B cell (primary cell): ENCODE measurements at regions of chr1 and their contacts with region 1.

Region 1: DNA sequence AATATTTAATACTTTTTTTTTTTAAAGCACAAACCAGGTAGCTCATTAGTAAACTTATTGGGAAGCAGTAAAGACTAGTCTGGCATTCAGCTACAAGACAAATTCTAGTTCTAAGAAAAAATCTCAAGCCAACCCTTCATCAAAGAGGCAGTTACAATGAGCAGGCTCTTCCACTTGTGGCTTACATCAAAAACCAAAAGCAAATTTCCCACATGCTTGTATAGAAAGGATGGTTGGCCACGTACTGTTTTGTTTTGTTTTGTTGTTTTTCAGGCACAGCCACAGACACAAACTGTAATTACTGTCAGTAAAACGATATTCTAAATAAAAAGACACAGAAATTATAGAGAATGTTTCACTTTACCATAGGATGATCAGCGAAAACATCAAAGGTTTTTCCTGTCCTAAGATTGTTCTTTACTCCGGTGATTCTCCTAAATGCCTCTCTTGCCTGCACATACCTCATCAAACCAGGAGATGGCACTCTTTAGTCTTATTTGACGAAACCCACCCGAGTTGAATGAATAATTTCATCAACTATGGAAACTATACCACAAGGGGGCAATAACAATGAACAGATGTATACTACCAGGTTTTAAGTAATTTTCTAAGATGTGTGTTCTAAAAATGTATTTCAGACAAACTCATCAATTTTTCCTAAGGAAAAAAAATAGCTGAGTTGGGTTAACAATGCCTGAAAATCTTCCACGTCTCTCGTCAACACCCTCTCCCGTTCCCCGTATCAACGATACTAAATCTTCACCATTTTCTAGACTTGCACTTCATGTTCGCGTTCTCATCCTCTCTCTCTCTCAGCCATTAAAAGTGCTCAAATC is 26.9 kb downstream of the RPL5 start:
- DNase-seq: peak; percentile 87
- ATAC-seq: peak; percentile 98
- H3K4me3 ChIP-seq: no peak overlapping the region
- H3K4me3 Mint-ChIP-seq: peak overlapping the region; percentile 2
- H3K27ac ChIP-seq: peak overlapping the region in 1 of 2 donors; percentile 38
- H3K27ac Mint-ChIP-seq: peak overlapping the region; percentile 0
- H3K4me1 ChIP-seq: peaks cover 0 to 4% of the 10 kb centered on the region in 2 donors
- H3K4me1 Mint-ChIP-seq: peaks cover 13% of the 10 kb centered on the region
- H3K27me3 ChIP-seq: no peaks in the 10 kb centered on the region
- H3K27me3 Mint-ChIP-seq: no peaks in the 10 kb centered on the region
- CTCF ChIP-seq: peak; percentile 99

Region 2: DNA sequence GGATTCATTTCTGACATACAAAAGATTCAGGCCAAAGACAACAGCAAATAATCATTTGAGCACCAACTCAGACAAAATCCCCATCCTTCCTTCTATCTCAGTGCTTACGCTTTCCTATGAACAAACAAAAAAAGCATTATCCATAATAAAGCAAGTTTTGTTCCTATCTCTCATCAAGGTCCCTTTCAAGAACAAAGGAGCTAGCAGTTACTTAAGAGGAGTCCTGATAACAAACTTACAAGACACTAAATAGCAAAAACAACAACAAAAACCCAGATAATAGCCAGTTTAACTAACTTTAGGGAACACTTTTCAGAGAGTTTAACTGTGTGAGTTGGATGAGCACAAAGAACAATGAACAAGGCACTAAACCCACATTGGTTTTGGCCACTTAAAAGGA is 84.4 kb before region 1 on chr1:
- CTCF ChIA-PET with region 1: no interaction called
- POLR2A ChIA-PET with region 1: no interaction called
- intact Hi-C with region 1: no loop called
- DNase-seq: no peak
- ATAC-seq: no peak
- H3K4me3 ChIP-seq: no peak overlapping the region
- H3K4me3 Mint-ChIP-seq: no peak overlapping the region
- H3K27ac ChIP-seq: no peak overlapping the region
- H3K27ac Mint-ChIP-seq: no peak overlapping the region
- H3K4me1 ChIP-seq: no peaks in the 10 kb centered on the region
- H3K4me1 Mint-ChIP-seq: peaks cover 12% of the 10 kb centered on the region
- H3K27me3 ChIP-seq: no peaks in the 10 kb centered on the region
- H3K27me3 Mint-ChIP-seq: no peaks in the 10 kb centered on the region
- CTCF ChIP-seq: no peak

Region 3: DNA sequence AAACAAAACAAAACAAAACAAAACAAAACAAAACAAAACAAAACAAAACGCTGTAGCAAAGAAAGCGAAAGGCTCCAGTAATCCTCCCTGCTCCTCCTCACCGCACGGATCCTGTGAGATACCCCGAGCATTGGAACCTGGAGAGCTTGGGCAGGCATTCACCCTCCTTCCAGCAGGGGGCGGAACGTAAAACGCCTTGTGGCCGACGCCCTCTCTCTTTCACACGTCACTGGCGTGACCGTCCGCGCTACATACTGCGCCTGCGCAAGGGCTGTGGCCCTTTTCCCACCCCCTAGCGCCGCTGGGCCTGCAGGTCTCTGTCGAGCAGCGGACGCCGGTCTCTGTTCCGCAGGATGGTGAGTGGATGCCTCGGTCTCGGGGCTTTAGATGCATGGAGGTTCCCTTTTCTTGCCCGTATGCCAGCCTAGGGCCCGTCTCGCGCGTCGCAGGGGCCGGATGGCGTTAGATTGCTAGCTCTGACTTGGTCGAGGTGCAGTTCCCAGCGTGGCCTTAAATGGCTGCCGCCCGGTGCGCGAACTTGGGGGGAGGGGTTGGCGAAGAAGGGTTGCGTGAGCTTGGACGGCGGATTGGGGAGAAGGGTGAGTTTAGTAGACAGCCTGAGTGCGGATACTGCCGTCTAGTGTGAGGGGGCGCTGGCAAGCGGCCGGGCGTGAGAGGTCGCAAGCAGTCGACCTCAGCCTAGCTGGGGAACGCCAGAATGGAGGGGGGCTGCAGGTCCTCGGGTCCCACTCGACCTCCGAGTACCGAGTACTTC is 26.8 kb before region 1 on chr1 and contains the start of gene RPL5:
- CTCF ChIA-PET with region 1: interaction called, 6 read pairs
- POLR2A ChIA-PET with region 1: no interaction called
- intact Hi-C with region 1: loop called (anchors 1 kb)
- DNase-seq: peak; percentile 100
- ATAC-seq: peak; percentile 88
- H3K4me3 ChIP-seq: peak within 1 kb of the TSS; percentile 84 to 98 (median 92)
- H3K4me3 Mint-ChIP-seq: peak within 1 kb of the TSS; percentile 100
- H3K27ac ChIP-seq: peak within 1 kb of the TSS; percentile 90 to 96
- H3K27ac Mint-ChIP-seq: peak within 1 kb of the TSS; percentile 100
- H3K4me1 ChIP-seq: peaks cover 25 to 28% of the 10 kb centered on the region in 2 donors
- H3K4me1 Mint-ChIP-seq: peaks cover 47% of the 10 kb centered on the region
- H3K27me3 ChIP-seq: no peaks in the 10 kb centered on the region
- H3K27me3 Mint-ChIP-seq: no peaks in the 10 kb centered on the region
- CTCF ChIP-seq: peak; percentile 89
- total RNA-seq, gene RPL5: 1,049 and 1,104 TPM in 2 replicates

Region 4: GRCh38 chr1:92882819-92883218 is 24.0 kb after region 1 on chr1:
- CTCF ChIA-PET with region 1: interaction called, 11 read pairs
- POLR2A ChIA-PET with region 1: no interaction called
- intact Hi-C with region 1: no loop called
- DNase-seq: peak; percentile 43
- ATAC-seq: peak; percentile 54
- H3K4me3 ChIP-seq: no peak overlapping the region
- H3K4me3 Mint-ChIP-seq: peak overlapping the region; percentile 40
- H3K27ac ChIP-seq: peak overlapping the region in 1 of 2 donors; percentile 76
- H3K27ac Mint-ChIP-seq: peak overlapping the region; percentile 83
- H3K4me1 ChIP-seq: peaks cover 22 to 25% of the 10 kb centered on the region in 2 donors
- H3K4me1 Mint-ChIP-seq: peaks cover 45% of the 10 kb centered on the region
- H3K27me3 ChIP-seq: no peaks in the 10 kb centered on the region
- H3K27me3 Mint-ChIP-seq: no peaks in the 10 kb centered on the region
- CTCF ChIP-seq: no peak

Region 5: DNA sequence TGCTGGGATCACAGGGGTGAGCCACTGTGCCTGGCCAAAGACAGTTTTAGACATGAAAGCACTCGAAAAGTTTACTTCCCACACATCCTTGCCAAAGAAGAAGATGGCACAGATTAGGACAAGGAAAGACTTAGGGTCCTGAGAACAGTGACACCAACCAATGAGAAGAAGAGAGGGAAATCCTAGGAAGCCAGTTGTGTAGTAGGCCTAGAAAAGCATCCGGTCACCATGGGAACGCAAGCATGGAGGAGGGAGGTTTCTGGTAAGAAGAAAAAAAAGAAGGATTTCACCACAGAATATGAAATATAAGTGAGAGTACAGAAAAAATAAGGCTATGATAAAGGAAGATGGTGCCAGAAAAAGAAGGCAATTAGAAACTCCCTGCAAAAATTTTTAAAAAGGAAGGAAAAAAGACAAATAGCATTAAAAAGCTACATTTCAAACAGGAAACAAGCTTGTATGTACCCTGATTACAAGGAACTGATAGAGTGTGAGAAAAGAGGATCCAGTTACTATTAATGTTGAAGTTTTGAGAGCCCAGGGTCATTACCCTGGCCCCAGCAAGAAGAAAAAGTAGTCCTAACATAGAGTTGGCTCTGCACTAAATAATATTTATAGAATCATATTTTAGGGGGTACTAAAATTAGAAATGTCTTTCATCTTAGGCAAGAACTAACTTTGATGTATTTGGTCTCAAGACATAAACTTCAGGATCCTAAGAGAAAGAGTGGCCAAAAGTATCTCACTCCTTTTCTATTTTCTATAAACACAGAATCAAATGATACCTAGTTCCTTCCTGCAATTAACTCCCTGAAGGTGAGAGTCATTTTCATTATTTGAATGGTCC is 86.3 kb after region 1 on chr1:
- CTCF ChIA-PET with region 1: interaction called, 11 read pairs
- POLR2A ChIA-PET with region 1: no interaction called
- intact Hi-C with region 1: no loop called
- DNase-seq: peak; percentile 51
- ATAC-seq: peak; percentile 53
- H3K4me3 ChIP-seq: peak overlapping the region in 2 of 5 experiments; percentile 5 to 50
- H3K4me3 Mint-ChIP-seq: peak overlapping the region; percentile 71
- H3K27ac ChIP-seq: peak overlapping the region; percentile 73 to 85
- H3K27ac Mint-ChIP-seq: peak overlapping the region; percentile 82
- H3K4me1 ChIP-seq: peaks cover 68 to 72% of the 10 kb centered on the region in 2 donors
- H3K4me1 Mint-ChIP-seq: peaks cover 66% of the 10 kb centered on the region
- H3K27me3 ChIP-seq: no peaks in the 10 kb centered on the region
- H3K27me3 Mint-ChIP-seq: no peaks in the 10 kb centered on the region
- CTCF ChIP-seq: no peak

Region 6: DNA sequence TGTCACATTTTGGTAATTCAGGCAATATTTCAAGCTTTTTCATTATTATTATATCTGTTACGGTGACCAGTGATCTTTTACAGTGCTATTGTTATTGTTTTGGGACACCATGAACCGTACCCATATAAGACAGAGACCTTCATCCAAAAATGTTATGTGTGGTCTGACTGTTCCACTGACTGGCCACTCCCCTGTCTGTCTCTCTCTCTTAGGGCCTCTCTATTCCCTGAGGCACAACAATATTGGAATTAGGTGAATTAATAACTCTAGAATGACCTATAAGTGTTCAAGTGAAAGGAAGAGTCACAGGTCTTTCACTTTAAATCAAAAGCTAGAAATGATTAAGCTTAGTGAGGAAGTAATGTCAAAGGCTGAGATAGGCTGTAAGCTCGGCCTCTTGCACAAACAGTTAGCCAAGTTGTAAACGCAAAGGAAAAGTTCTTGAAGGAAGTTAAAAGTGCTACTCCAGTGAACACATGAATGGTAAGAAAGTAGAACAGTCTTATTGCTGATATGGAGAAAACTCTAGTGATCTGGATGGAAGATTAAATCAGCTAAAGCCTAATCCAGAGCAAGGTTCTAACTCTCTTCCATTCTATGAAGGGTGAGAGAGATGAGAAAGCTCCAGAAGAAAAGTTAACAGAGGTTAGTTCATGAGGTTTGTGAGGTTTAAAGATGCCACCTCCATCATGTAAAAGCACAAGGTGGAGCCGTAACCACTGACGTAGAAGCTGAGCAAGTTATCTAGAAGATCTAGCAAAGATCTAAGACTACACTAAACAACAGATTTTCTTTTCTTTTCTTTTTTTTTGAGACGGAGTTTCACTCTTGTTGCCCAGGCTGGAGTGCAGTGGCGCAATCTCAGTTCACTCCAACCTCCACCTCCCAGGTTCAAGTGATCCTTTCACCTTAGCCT is 122.2 kb after region 1 on chr1:
- CTCF ChIA-PET with region 1: interaction called, 94 read pairs
- POLR2A ChIA-PET with region 1: interaction called, 3 read pairs
- intact Hi-C with region 1: no loop called
- DNase-seq: peak; percentile 48
- ATAC-seq: peak; percentile 37
- H3K4me3 ChIP-seq: peak overlapping the region in 1 of 5 experiments; percentile 24
- H3K4me3 Mint-ChIP-seq: peak overlapping the region; percentile 69
- H3K27ac ChIP-seq: peak overlapping the region; percentile 47 to 80
- H3K27ac Mint-ChIP-seq: peak overlapping the region; percentile 98
- H3K4me1 ChIP-seq: peaks cover 54 to 55% of the 10 kb centered on the region in 2 donors
- H3K4me1 Mint-ChIP-seq: peaks cover 52% of the 10 kb centered on the region
- H3K27me3 ChIP-seq: no peaks in the 10 kb centered on the region
- H3K27me3 Mint-ChIP-seq: no peaks in the 10 kb centered on the region
- CTCF ChIP-seq: no peak

Region 7: DNA sequence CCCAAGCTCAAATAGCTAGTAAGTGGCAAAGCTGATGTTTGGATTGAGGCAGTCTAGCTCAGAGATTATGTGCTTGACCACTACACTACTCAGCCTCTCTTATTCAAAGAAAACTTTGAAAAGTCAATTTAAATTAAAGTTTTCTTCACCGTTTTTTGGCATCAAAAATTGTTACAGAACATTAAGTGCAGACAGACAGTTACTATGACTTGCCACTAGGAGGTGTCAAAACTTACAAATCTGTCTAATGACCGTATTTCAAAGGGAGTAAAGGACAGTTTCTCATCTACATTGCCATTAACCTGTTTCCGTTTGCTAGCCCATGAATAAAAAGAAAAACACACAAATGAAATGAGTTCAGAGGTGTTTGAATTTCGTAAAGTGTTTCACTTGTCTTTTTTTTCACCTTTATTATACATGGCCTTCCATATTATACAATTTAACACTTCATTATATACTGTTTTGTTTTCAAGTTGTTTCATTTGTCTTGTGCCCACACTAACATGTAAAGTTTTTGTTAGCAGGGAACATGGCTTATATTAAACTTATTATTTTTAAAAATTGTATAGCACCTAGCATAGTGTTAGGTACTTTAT is 162.9 kb after region 1 on chr1:
- CTCF ChIA-PET with region 1: interaction called, 11 read pairs
- POLR2A ChIA-PET with region 1: no interaction called
- intact Hi-C with region 1: no loop called
- DNase-seq: peak; percentile 70
- ATAC-seq: peak; percentile 81
- H3K4me3 ChIP-seq: peak overlapping the region in 1 of 5 experiments; percentile 40
- H3K4me3 Mint-ChIP-seq: peak overlapping the region; percentile 72
- H3K27ac ChIP-seq: peak overlapping the region in 1 of 2 donors; percentile 16
- H3K27ac Mint-ChIP-seq: no peak overlapping the region
- H3K4me1 ChIP-seq: peaks cover 8 to 10% of the 10 kb centered on the region in 2 donors
- H3K4me1 Mint-ChIP-seq: peaks cover 11% of the 10 kb centered on the region
- H3K27me3 ChIP-seq: no peaks in the 10 kb centered on the region
- H3K27me3 Mint-ChIP-seq: peaks cover 10% of the 10 kb centered on the region
- CTCF ChIP-seq: peak; percentile 95

Region 8: GRCh38 chr1:93078986-93079654 is 220.3 kb after region 1 on chr1 and contains the start of gene MTF2:
- CTCF ChIA-PET with region 1: no interaction called
- POLR2A ChIA-PET with region 1: no interaction called
- intact Hi-C with region 1: loop called (anchors 5 kb)
- DNase-seq: peak; percentile 95
- ATAC-seq: peak; percentile 92
- H3K4me3 ChIP-seq: peak within 1 kb of the TSS; percentile 85 to 98 (median 89)
- H3K4me3 Mint-ChIP-seq: peak within 1 kb of the TSS; percentile 100
- H3K27ac ChIP-seq: peak within 1 kb of the TSS; percentile 80 to 87
- H3K27ac Mint-ChIP-seq: peak within 1 kb of the TSS; percentile 99
- H3K4me1 ChIP-seq: peaks cover 24 to 30% of the 10 kb centered on the region in 2 donors
- H3K4me1 Mint-ChIP-seq: peaks cover 46% of the 10 kb centered on the region
- H3K27me3 ChIP-seq: no peaks in the 10 kb centered on the region
- H3K27me3 Mint-ChIP-seq: no peaks in the 10 kb centered on the region
- CTCF ChIP-seq: no peak
- total RNA-seq, gene MTF2: 66.2 and 68.6 TPM in 2 replicates